Dendritic cell treated with granulocyte-macrophage colony-stimulating factor and Interleukin-4, amounts not matched to agents 40 ng/mL and 50 ng/mL, for 4 days (primary cell): ENCODE measurements at regions of chr17 and their contacts with region 1.

Region 1: GRCh38 chr17:75904749-75905521 is at the start of gene MRPL38:
- H3K4me3 Mint-ChIP-seq: peak within 1 kb of the TSS; percentile 91
- H3K27ac Mint-ChIP-seq: peak within 1 kb of the TSS; percentile 95
- H3K4me1 Mint-ChIP-seq: peaks cover 15% of the 10 kb centered on the region
- H3K27me3 Mint-ChIP-seq: peaks cover 1% of the 10 kb centered on the region

Region 2: DNA sequence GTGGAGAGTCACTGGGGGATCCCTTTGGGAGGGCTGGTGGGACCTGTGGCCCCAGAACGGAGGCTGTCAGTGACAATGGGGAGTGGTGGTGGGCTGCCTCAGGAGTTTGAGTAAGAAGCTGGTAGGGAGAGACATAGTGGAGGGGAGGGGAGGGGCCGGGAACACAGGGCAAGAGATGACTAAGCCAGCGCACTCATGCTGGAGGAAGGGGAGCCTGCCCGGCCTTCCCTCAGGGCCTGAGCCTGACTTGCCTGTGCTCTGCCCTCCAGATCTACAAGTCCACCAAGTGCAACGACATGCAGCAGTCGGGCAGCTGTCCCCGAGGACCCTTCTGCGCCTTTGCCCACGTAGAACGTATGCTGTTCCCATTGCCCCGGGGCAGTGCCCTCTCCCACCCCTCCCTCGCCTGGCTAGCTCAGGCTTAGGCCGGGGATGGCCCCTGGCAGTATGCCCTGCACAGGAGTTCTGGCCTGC is 90.0 kb before region 1 on chr17:
- intact Hi-C with region 1: no loop called
- H3K4me3 Mint-ChIP-seq: no peak overlapping the region
- H3K27ac Mint-ChIP-seq: no peak overlapping the region
- H3K4me1 Mint-ChIP-seq: no peaks in the 10 kb centered on the region
- H3K27me3 Mint-ChIP-seq: no peaks in the 10 kb centered on the region

Region 3: GRCh38 chr17:75855310-75856081 is 49.4 kb before region 1 on chr17 and contains the start of gene WBP2:
- intact Hi-C with region 1: loop called (anchors 2 kb)
- H3K4me3 Mint-ChIP-seq: no peak within 1 kb of the TSS
- H3K27ac Mint-ChIP-seq: no peak within 1 kb of the TSS
- H3K4me1 Mint-ChIP-seq: peaks cover 40% of the 10 kb centered on the region
- H3K27me3 Mint-ChIP-seq: no peaks in the 10 kb centered on the region

Region 4: DNA sequence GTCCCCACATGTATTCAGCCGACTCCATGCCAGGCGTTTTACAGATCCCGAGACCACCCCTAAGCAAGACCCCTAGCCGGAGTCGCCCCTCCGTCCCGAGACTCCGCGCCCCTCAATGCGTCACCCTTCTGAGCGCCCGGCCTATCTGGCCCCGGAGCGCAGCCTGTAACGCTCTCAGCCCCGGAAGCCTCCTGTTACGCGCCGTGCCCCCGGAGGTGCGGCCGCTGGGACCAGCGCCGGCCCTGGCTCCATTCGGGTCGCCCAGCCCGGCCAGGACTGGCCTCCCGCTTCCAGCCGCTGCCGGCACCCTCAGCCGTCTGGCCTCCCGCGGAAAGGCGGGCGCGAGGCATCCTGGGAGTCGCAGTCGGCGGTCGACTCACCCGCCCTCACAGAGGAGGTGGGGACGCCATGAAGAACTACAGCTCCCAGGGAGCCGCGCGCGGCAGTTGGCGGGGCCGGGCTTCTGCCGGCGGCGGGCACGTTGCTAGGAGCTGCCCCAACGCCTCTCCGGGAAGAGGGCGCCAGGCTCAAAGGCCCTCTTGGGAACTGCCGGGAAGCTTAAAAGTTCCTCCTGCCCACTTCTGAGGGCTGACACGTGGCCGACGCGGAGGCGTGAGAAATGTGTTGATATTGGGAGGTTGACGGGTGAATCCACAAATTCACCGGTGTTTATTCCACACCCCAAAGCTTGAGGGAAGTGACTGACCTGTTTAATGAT is 35.9 kb after region 1 on chr17 and contains the start of gene FBF1:
- intact Hi-C with region 1: loop called (anchors 1 kb)
- H3K4me3 Mint-ChIP-seq: peak within 1 kb of the TSS; percentile 78
- H3K27ac Mint-ChIP-seq: peak within 1 kb of the TSS; percentile 80
- H3K4me1 Mint-ChIP-seq: peaks cover 16% of the 10 kb centered on the region
- H3K27me3 Mint-ChIP-seq: peaks cover 2% of the 10 kb centered on the region

Region 5: GRCh38 chr17:75978938-75979704 is 74.2 kb after region 1 on chr17 and contains the starts of genes ACOX1 and TEN1:
- intact Hi-C with region 1: loop called (anchors 2 kb)
- H3K4me3 Mint-ChIP-seq: peak within 1 kb of the TSS; percentile 83
- H3K27ac Mint-ChIP-seq: peak within 1 kb of the TSS; percentile 97
- H3K4me1 Mint-ChIP-seq: peaks cover 59% of the 10 kb centered on the region
- H3K27me3 Mint-ChIP-seq: no peaks in the 10 kb centered on the region

Region 6: GRCh38 chr17:76005263-76006149 is 100.6 kb after region 1 on chr17:
- intact Hi-C with region 1: loop called (anchors 1 kb)
- H3K4me3 Mint-ChIP-seq: no peak overlapping the region
- H3K27ac Mint-ChIP-seq: no peak overlapping the region
- H3K4me1 Mint-ChIP-seq: peaks cover 6% of the 10 kb centered on the region
- H3K27me3 Mint-ChIP-seq: no peaks in the 10 kb centered on the region

Region 7: GRCh38 chr17:76027159-76027839 is 122.4 kb after region 1 on chr17 and contains the start of gene EVPL:
- intact Hi-C with region 1: no loop called
- H3K4me3 Mint-ChIP-seq: no peak within 1 kb of the TSS
- H3K27ac Mint-ChIP-seq: no peak within 1 kb of the TSS
- H3K4me1 Mint-ChIP-seq: peaks cover 9% of the 10 kb centered on the region
- H3K27me3 Mint-ChIP-seq: peaks cover 26% of the 10 kb centered on the region